ENCODE measurements at regions of chr4 and their contacts with region 1.

Region 1: DNA sequence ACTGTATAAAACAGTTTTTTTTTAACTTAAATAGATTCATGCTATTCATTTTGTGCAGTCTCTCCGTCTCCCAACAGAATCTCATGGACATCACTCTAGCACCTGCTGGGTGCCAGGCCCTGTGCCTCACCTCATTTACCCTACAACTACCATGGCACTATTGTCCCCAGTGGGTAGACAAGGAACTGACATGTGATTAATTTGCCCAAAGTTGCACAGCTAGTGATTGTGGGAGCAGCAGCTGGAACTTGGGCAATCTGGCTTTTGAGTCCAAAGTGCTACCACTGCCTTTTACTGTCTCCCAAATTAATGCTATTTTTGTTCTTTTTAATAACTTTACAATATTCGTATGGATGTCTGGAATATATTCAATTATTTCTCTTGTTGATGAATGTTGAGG is 11.2 kb upstream of the PGRMC2 start:
- DNase-seq: no peak
- H3K4me3 ChIP-seq: no peak overlapping the region
- H3K27ac ChIP-seq: no peak overlapping the region
- H3K4me1 ChIP-seq: no peaks in the 10 kb centered on the region
- H3K27me3 ChIP-seq: no peaks in the 10 kb centered on the region
- CTCF ChIP-seq: no peak
- POLR2A ChIP-seq: no peak

Region 2: DNA sequence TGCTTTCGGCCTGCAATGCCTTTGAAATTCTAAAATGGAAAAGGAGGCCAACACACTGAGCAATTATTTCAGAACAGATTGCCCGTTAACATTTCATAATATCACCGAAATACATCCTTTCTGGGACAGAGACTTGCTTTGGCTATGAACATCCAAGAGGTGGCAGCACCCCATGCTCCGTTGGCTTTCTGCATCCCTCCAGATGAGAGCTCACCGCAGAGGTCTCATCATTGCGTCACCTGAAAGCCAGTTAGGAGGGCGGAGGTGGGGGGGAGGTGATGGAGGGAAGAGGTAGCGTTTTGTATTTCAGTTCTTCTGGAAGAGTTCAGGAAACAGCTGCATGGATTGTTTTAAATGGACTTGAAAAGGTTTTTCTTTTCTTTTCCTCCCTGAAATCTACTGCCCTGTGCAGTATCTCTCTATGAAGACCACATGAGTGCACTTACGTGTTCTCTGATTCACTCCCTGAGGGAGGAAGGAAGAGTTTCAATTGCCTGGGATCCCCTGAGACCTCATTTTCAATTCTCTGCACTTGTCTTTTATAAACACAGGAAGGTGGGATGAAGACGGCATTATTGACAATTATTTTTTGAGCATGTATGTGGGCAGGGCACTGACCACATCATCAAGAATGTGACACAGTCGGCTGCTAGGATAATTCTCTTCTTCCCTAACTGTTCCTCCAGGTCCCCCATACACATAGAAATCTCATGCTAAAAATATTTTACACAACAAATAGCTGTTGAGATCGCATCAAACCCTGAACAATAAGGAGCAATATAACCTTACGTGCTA is 155.6 kb after region 1 on chr4:
- intact Hi-C with region 1: loop called (anchors 10 kb)
- DNase-seq: peak; percentile 78
- H3K4me3 ChIP-seq: no peak overlapping the region
- H3K27ac ChIP-seq: no peak overlapping the region
- H3K4me1 ChIP-seq: no peaks in the 10 kb centered on the region
- H3K27me3 ChIP-seq: no peaks in the 10 kb centered on the region
- CTCF ChIP-seq: peak; percentile 35 to 84 (median 71)
- POLR2A ChIP-seq: no peak

Measured in prostate gland (tissue), 2 donors.